H1 (cell line): ENCODE measurements at regions of chr17 and their contacts with region 1.

Region 1: DNA sequence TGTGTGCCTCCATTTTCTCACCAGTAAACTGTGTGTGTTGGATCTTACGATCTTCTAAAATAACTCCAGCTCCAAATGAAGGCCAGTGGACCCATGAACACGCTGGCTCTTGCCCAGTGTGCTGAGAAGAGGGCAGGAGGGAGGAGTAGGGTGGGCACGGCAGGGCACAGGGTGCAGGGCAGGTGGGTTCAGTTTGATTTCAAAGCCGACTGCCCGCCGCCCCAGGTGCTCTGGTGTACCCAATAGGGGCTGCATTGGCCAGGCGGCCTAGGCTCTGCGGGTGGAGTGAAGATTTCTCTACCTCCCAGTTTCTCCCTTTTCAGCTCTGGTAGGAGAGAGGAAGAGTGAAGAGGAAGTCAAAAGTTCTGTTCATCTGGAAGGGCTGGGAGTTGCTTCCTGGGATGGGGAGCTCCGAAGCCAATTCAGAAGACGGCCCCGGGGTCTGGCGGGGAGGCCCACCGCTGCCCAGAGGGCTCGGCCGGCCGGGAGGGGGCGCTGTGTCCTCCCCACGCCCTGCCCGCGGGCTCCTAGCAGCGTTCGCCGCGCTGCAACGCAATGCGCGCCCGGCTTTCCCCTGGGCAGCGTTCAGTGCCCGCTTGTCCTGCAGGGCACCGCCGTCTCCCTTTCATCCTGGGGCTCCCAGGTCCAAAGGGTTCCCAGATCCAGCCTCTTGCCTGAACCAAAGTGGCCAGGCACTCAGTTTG is 1.1 kb upstream of the CRHR1 start:
- DNase-seq: peak in 1 of 2 experiments; percentile 93
- H3K4me3 ChIP-seq: peak overlapping the region; percentile 48 to 96 (median 76)
- H3K27ac ChIP-seq: no peak overlapping the region
- H3K4me1 ChIP-seq: peaks cover 0 to 19% (median 6%) of the 10 kb centered on the region in 4 experiments; a peak in 6 of 7 replicates
- H3K27me3 ChIP-seq: peaks cover 12 to 57% (median 49%) of the 10 kb centered on the region in 4 experiments
- CTCF ChIP-seq: peak; percentile 81 to 90 (median 87)
- EP300 ChIP-seq: no peak
- POLR2A ChIP-seq: no peak
- RAD21 ChIP-seq: peak; percentile 48 to 67; a peak in 3 of 4 replicates

Region 2: GRCh38 chr17:45747911-45748310 is 35.1 kb before region 1 on chr17:
- CTCF ChIA-PET with region 1: interaction called, 14 read pairs
- POLR2A ChIA-PET with region 1: no interaction called
- DNase-seq: no peak
- H3K4me3 ChIP-seq: no peak overlapping the region
- H3K27ac ChIP-seq: no peak overlapping the region
- H3K4me1 ChIP-seq: peaks cover 2 to 5% (median 3%) of the 10 kb centered on the region in 4 experiments; a peak in 5 of 7 replicates
- H3K27me3 ChIP-seq: peaks cover 17 to 90% (median 67%) of the 10 kb centered on the region in 4 experiments
- CTCF ChIP-seq: no peak
- EP300 ChIP-seq: no peak
- POLR2A ChIP-seq: no peak
- RAD21 ChIP-seq: no peak

Region 3: GRCh38 chr17:45768000-45768399 is 15.0 kb before region 1 on chr17:
- CTCF ChIA-PET with region 1: interaction called, 84 read pairs
- POLR2A ChIA-PET with region 1: interaction called, 23 read pairs
- DNase-seq: no peak
- H3K4me3 ChIP-seq: no peak overlapping the region
- H3K27ac ChIP-seq: no peak overlapping the region
- H3K4me1 ChIP-seq: peaks cover 9 to 17% (median 13%) of the 10 kb centered on the region in 4 experiments
- H3K27me3 ChIP-seq: no peaks in the 10 kb centered on the region
- CTCF ChIP-seq: peak; percentile 40 to 54 (median 41)
- EP300 ChIP-seq: no peak
- POLR2A ChIP-seq: no peak
- RAD21 ChIP-seq: peak; percentile 30 to 50; a peak in 3 of 4 replicates

Region 4: GRCh38 chr17:45794840-45795239 is 11.8 kb after region 1 on chr17:
- CTCF ChIA-PET with region 1: interaction called, 50 read pairs
- POLR2A ChIA-PET with region 1: interaction called, 3 read pairs
- DNase-seq: no peak
- H3K4me3 ChIP-seq: no peak overlapping the region
- H3K27ac ChIP-seq: no peak overlapping the region
- H3K4me1 ChIP-seq: peaks cover 0 to 8% (median 3%) of the 10 kb centered on the region in 4 experiments; a peak in 3 of 7 replicates
- H3K27me3 ChIP-seq: peaks cover 0 to 5% (median 0%) of the 10 kb centered on the region in 4 experiments; a peak in 1 of 7 replicates
- CTCF ChIP-seq: peak; percentile 45 to 61 (median 49)
- EP300 ChIP-seq: no peak
- POLR2A ChIP-seq: no peak
- RAD21 ChIP-seq: peak; percentile 44 to 62; a peak in 3 of 4 replicates

Region 5: GRCh38 chr17:45812102-45812501 is 29.1 kb after region 1 on chr17:
- CTCF ChIA-PET with region 1: interaction called, 17 read pairs
- POLR2A ChIA-PET with region 1: interaction called, 3 read pairs
- DNase-seq: no peak
- H3K4me3 ChIP-seq: no peak overlapping the region
- H3K27ac ChIP-seq: no peak overlapping the region
- H3K4me1 ChIP-seq: peaks cover 0 to 3% (median 0%) of the 10 kb centered on the region in 4 experiments; a peak in 1 of 7 replicates
- H3K27me3 ChIP-seq: no peaks in the 10 kb centered on the region
- CTCF ChIP-seq: peak; percentile 34 to 48 (median 47); a peak in 3 of 4 replicates
- EP300 ChIP-seq: no peak
- POLR2A ChIP-seq: no peak
- RAD21 ChIP-seq: peak; percentile 25 to 45; a peak in 3 of 4 replicates

Region 6: DNA sequence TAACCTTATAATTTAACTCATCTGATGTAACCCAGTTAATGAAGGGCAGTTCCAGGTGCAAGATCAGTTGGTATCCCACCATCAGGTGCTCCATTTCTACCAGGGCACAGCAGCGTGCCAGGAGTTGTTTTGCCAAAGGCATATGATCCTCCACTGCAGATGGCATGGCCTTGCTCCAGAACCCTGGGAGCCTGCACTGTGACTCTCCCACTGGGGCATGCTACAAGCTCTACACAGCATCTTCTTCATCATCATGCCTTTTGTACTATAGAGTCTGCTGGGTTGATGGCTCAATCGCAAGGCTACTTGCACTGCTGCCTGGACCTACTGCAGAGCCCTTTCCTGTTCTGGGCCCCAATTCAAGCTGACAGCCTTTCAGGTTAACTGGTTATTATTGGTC is 100.0 kb after region 1 on chr17:
- CTCF ChIA-PET with region 1: no interaction called
- POLR2A ChIA-PET with region 1: no interaction called
- DNase-seq: no peak
- H3K4me3 ChIP-seq: no peak overlapping the region
- H3K27ac ChIP-seq: no peak overlapping the region
- H3K4me1 ChIP-seq: no peaks in the 10 kb centered on the region
- H3K27me3 ChIP-seq: no peaks in the 10 kb centered on the region
- CTCF ChIP-seq: no peak
- EP300 ChIP-seq: no peak
- POLR2A ChIP-seq: no peak
- RAD21 ChIP-seq: no peak